HCT116 (cell line): ENCODE measurements at regions of chr7 and their contacts with region 1.

Region 1: DNA sequence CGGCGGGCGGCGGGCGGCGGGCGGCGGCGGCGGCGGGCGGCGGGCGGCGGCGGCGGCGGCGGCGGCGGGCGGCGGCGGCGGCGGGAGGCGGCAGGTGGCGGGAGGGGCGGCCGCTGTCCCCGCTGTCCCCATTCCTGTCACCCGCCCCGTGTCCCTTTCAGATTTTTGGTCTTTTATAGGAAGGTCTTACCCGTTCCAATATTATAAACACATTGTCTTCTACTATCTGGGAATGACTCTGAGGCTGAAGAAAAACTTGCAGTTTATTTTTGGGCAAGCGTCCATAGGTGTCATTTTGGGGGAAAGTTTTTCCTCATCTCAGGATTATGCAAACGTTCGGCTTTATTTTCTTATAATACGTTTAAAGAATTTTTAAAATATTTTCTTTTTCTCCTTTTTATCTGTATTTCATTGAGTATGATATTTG is 578 bp downstream of the ZNF713 start:
- DNase-seq: no peak
- ATAC-seq: no peak
- H3K4me3 ChIP-seq: peak overlapping the region; percentile 47 to 55
- H3K27ac ChIP-seq: peak overlapping the region; percentile 50; the same call in 1 of the 2 replicates
- H3K4me1 ChIP-seq: peaks cover 3 to 7% of the 10 kb centered on the region in 2 experiments; a peak in 1 of 4 replicates
- H3K27me3 ChIP-seq: no peaks in the 10 kb centered on the region
- CTCF ChIP-seq: no peak
- POLR2A ChIP-seq: no peak
- RAD21 ChIP-seq: no peak

Region 2: GRCh38 chr7:55110661-55111361 is 777.0 kb before region 1 on chr7:
- CTCF ChIA-PET with region 1: no interaction called
- POLR2A ChIA-PET with region 1: no interaction called
- RAD21 ChIA-PET with region 1: no interaction called
- intact Hi-C with region 1: no loop called
- DNase-seq: no peak
- ATAC-seq: no peak
- H3K4me3 ChIP-seq: no peak overlapping the region
- H3K27ac ChIP-seq: no peak overlapping the region
- H3K4me1 ChIP-seq: peaks cover 41 to 82% of the 10 kb centered on the region in 2 experiments
- H3K27me3 ChIP-seq: no peaks in the 10 kb centered on the region
- CTCF ChIP-seq: no peak
- POLR2A ChIP-seq: no peak
- RAD21 ChIP-seq: no peak

Region 3: GRCh38 chr7:55951637-55952351 is 64.0 kb after region 1 on chr7 and contains the start of gene MRPS17:
- CTCF ChIA-PET with region 1: no interaction called
- POLR2A ChIA-PET with region 1: no interaction called
- RAD21 ChIA-PET with region 1: no interaction called
- intact Hi-C with region 1: loop called (anchors 5 kb)
- DNase-seq: peak; percentile 85
- ATAC-seq: peak; percentile 100
- H3K4me3 ChIP-seq: peak within 1 kb of the TSS; percentile 99 to 100
- H3K27ac ChIP-seq: peak within 1 kb of the TSS; percentile 69
- H3K4me1 ChIP-seq: peaks cover 0 to 5% of the 10 kb centered on the region in 2 experiments; a peak in 1 of 4 replicates
- H3K27me3 ChIP-seq: no peaks in the 10 kb centered on the region
- CTCF ChIP-seq: no peak
- POLR2A ChIP-seq: peak; percentile 69
- RAD21 ChIP-seq: no peak
- total RNA-seq, gene MRPS17: 27.5 TPM